MCF 10A (cell line): ENCODE measurements at regions of chr11 and their contacts with region 1.

Region 1: DNA sequence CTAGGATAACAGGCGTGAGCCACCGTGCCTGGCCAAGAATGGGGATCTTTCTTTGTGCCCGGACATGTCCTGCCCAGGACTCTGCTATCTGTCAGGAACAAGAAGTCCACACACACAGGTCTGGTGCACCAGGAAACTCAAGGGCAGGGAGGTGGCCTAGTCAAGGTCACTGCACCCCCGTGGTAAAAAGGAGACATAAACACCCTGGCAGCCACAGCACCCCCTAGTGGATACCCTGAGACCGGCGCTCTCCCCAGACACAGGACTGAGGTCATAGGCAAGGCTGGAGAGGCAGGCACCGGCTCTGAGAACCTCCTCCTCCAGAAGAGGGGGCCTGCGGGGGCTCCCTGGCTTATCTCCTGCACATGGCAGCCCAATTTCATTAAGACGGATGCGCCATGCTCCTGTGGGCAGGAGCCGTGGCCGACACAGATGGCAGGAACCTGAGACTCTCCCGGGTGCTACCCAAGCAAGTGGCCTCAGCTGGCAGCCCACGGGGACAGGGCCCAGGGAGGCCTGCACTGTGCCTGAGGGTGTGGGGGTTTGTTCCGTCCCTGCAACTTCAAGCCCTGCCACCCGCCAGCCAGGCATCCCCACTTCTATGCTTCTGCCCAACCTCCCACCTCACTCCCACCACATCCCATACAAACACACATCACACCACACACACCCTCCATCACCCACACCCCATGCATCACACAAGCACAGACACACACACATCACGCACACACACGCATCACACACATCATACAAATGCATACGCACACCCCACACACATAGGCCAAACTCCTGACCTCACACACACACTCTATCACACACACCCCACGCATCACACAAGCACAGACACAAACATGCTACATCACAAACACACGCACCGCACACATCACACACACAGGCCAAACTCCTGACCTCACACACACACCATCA is 19.6 kb downstream of the MACROD1 start:
- DNase-seq: peak; percentile 49
- H3K4me3 Mint-ChIP-seq: no peak overlapping the region
- H3K27ac Mint-ChIP-seq: no peak overlapping the region
- H3K4me1 Mint-ChIP-seq: peaks cover 6% of the 10 kb centered on the region
- H3K27me3 Mint-ChIP-seq: no peaks in the 10 kb centered on the region
- CTCF ChIP-seq: peak; percentile 72

Region 2: DNA sequence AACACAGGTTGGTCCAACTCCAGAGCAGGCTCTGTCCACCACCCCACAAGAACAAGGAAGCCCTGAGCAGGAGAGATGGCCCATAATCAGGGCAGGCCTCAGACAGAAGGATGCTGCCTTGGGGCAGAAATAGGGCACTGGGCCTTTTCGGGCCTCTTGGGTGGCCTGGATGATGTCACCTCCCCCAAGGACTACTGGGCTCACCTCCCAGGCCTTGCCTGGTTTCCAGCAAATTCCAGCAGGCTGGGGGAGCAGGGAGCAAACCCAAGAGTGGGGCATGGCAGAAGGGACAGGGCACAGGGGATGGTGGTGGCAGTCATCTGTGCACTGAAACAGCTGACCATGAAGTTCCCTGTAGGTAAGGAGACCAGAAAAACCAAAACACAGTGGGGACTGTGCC is 212.8 kb before region 1 on chr11:
- CTCF ChIA-PET with region 1: no interaction called
- POLR2A ChIA-PET with region 1: no interaction called
- intact Hi-C with region 1: no loop called
- DNase-seq: no peak
- H3K4me3 Mint-ChIP-seq: no peak overlapping the region
- H3K27ac Mint-ChIP-seq: no peak overlapping the region
- H3K4me1 Mint-ChIP-seq: no peaks in the 10 kb centered on the region
- H3K27me3 Mint-ChIP-seq: no peaks in the 10 kb centered on the region
- CTCF ChIP-seq: no peak

Region 3: GRCh38 chr11:64000026-64000739 is 146.1 kb before region 1 on chr11:
- CTCF ChIA-PET with region 1: interaction called, 4 read pairs
- POLR2A ChIA-PET with region 1: no interaction called
- intact Hi-C with region 1: loop called (anchors 1 kb)
- DNase-seq: no peak
- H3K4me3 Mint-ChIP-seq: no peak overlapping the region
- H3K27ac Mint-ChIP-seq: no peak overlapping the region
- H3K4me1 Mint-ChIP-seq: no peaks in the 10 kb centered on the region
- H3K27me3 Mint-ChIP-seq: no peaks in the 10 kb centered on the region
- CTCF ChIP-seq: peak; percentile 29

Region 4: DNA sequence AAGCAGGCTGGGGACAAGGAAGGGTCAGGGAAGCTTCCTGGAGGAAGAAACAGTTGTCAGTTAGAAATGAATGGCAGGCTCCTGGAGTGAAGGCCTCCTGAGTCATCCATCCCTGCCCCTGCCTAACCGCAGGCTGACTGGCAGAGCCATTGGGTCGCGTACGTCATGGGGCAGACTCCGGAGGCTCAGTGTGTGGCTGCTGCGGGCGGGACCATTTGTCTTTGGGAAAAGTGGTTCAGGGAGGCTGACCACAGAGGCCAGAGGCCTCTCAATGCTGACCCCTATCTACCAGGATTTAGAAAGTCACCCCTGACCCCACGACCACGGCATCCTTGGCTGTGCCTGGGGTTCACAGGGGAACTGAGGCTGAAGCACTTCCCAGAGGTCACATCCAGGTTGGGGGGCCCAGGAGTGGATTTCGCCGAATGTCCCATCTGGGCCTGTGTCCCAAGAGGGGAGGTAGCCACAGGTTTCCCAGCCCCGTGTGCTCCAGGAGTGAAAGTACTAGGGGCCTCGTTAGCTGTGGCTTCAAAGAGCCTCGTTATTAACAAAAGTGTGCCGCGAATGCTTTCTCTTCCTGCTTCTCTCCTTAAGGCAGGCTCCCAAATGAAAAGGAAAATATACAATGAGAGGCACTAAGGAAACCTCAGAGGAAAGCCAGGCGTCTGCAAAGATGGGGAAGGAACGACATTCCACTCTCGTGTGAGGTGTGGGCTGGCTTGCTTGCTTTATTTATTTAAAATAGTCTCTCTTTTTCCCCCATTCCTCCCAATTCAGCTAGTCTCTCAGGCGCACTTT is 51.6 kb before region 1 on chr11:
- CTCF ChIA-PET with region 1: no interaction called
- POLR2A ChIA-PET with region 1: no interaction called
- intact Hi-C with region 1: loop called (anchors 2 kb)
- DNase-seq: peak; percentile 93
- H3K4me3 Mint-ChIP-seq: no peak overlapping the region
- H3K27ac Mint-ChIP-seq: no peak overlapping the region
- H3K4me1 Mint-ChIP-seq: peaks cover 12% of the 10 kb centered on the region
- H3K27me3 Mint-ChIP-seq: no peaks in the 10 kb centered on the region
- CTCF ChIP-seq: no peak